ENCODE measurements at regions of chr2 and their contacts with region 1.

Region 1: DNA sequence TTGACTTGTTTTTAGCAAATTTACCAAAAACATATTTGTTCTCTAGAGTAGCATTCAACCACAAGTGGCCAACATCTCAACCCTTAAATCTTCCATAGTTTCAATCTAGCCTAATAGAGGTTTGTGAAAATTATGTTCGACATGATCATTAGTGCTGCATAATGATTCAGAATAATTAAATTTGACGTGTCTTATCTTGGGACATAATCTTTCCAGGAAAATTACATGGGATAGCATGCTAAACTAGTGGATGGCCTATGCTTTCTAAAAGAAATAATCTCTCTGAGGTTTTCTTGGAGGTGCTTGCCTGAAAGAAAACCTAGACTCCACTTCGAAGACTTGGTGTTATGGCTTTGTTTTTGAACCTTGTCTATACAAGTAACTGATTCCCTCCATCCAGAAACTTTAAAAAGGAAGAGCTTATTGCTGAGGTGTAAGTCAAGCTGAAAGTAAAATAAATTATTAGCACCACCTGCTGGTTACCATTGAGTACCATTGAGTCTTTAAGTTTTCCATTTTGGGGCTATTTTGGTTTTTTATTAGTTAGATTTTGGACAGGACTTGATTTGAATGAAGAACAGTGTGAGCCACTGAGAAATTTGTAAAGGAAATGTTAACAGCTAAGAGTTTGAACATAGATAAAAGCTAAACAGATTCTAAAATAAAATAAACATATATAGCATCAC is 32.7 kb downstream of the COX7A2L start:
- DNase-seq: peak; percentile 60
- H3K4me3 ChIP-seq: no peak overlapping the region
- H3K27ac ChIP-seq: no peak overlapping the region
- H3K4me1 ChIP-seq: no peaks in the 10 kb centered on the region
- CTCF ChIP-seq: peak; percentile 93

Region 2: GRCh38 chr2:41869542-41870264 is 458.6 kb before region 1 on chr2:
- CTCF ChIA-PET with region 1: no interaction called
- POLR2A ChIA-PET with region 1: no interaction called
- intact Hi-C with region 1: loop called (anchors 5 kb)
- DNase-seq: peak; percentile 57
- H3K4me3 ChIP-seq: no peak overlapping the region
- H3K27ac ChIP-seq: no peak overlapping the region
- H3K4me1 ChIP-seq: no peaks in the 10 kb centered on the region
- CTCF ChIP-seq: peak; percentile 81

Region 3: DNA sequence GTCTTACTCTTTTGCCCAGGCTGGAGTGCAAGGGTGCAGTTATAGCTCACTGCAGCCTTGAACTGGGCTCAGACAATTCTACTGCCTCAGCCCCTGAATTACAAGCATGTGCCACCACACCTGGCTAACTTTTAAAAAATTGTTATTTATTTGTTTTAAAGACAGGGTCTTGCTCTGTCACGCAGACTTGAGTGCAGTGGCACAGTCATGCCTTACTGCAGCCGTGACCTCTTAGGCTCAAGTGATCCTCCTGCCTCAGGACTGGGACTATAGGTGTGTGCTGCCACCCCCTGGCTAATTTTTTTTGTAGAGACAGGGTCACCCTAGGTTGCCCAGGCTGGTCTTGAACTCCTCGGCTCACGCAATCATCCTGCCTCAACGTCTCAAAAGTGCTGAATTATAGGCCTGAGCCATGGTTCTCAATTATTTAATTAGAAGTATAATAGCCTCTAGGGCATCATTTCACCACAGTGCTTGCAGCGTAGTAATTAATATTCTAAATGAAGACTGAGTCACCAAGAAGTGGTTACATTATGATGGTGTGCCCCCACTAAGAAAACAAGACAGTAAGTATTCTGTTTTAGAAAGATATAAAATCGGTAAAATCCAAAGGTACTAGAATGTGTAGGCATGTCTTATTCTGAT is 89.5 kb before region 1 on chr2:
- CTCF ChIA-PET with region 1: interaction called, 4 read pairs
- POLR2A ChIA-PET with region 1: no interaction called
- intact Hi-C with region 1: loop called (anchors 1 kb)
- DNase-seq: peak; percentile 76
- H3K4me3 ChIP-seq: no peak overlapping the region
- H3K27ac ChIP-seq: no peak overlapping the region
- H3K4me1 ChIP-seq: no peaks in the 10 kb centered on the region
- CTCF ChIP-seq: peak; percentile 85

Region 4: DNA sequence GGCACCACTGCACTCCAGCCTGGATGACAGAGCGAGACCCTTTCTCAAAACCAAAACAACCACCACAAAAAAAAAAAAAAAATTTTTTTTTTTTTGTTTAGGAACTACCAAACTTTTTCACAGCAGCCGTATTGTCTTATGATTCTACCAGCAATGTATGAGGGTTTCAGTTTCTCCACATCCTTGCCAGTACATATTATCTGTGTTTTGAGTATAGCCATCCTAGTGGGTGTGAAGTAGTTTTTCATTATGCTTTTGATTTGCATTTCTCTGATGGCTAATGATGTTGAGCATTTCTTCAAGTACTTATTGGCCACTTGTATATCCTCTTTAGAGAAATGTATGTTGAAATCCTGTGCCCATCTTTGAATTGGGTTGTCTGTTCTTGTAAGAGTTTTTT is 18.9 kb before region 1 on chr2:
- CTCF ChIA-PET with region 1: no interaction called
- POLR2A ChIA-PET with region 1: interaction called, 11 read pairs
- intact Hi-C with region 1: no loop called
- DNase-seq: no peak
- H3K4me3 ChIP-seq: no peak overlapping the region
- H3K27ac ChIP-seq: no peak overlapping the region
- H3K4me1 ChIP-seq: no peaks in the 10 kb centered on the region
- CTCF ChIP-seq: no peak

Region 5: GRCh38 chr2:42602877-42603219 is 274.6 kb after region 1 on chr2:
- CTCF ChIA-PET with region 1: no interaction called
- POLR2A ChIA-PET with region 1: no interaction called
- intact Hi-C with region 1: no loop called
- DNase-seq: no peak
- H3K4me3 ChIP-seq: no peak overlapping the region
- H3K27ac ChIP-seq: no peak overlapping the region
- H3K4me1 ChIP-seq: peaks cover 39% of the 10 kb centered on the region
- CTCF ChIP-seq: no peak